Activated T-helper 1 cell treated with anti-CD3 and anti-CD28 coated beads, Interleukin-12 subunit alpha, Interleukin-12 subunit beta, Interleukin-2, Interleukin-4 antibody, amounts not matched to agents 30 ng/mL and 10 ng/mL and 1 ng/mL, durations not matched to agents 14 hours and 24 hours and 36 hours (primary cell): ENCODE measurements at regions of chr20 and their contacts with region 1.

Region 1: GRCh38 chr20:33992923-33993575 is 662 bp upstream of the RALY start:
- DNase-seq: peak; percentile 99
- H3K4me3 Mint-ChIP-seq: peak overlapping the region; percentile 88
- H3K27ac Mint-ChIP-seq: peak overlapping the region; percentile 97
- H3K4me1 Mint-ChIP-seq: peaks cover 58% of the 10 kb centered on the region
- H3K27me3 Mint-ChIP-seq: peaks cover 2% of the 10 kb centered on the region

Region 2: DNA sequence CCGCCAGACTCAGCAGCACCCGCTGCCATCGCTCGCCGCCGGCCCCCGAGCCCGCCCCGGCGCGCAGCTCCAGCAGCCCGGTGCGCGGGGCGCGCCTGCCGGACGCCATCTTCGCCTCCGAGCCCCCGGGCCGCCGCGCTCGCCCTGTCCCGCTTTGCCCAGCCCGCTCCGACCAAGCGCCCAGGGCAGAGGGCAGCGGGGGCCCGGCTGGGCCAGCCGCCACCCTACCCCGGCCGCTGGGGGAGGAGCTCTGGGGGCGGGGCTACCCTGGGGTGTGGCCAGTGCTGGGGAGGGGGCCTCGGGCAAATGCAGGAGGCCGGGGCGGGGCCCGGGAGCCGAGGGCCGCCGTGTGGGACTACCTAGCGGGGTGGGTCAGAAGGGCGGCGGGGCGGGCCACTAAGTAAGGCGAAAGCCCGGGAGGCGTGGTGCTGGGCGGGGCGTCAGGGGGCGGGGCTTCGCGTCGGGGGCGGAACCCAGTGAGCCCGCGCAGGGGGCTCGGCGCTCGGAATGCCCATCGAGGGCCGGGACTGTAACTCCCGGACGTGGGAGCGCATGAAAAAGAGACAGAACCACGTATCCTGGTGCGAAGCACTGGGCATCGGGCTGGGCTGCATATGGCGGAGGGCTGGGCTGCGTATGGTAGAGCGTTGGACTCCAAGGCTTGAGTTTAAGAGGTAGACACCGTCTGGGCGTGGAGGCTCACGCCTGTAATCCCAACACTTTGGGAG is 549.4 kb before region 1 on chr20 and contains the start of gene SNTA1:
- intact Hi-C with region 1: loop called (anchors 1 kb)
- DNase-seq: peak; percentile 82
- H3K4me3 Mint-ChIP-seq: peak within 1 kb of the TSS; percentile 88
- H3K27ac Mint-ChIP-seq: peak within 1 kb of the TSS; percentile 76
- H3K4me1 Mint-ChIP-seq: peaks cover 10% of the 10 kb centered on the region
- H3K27me3 Mint-ChIP-seq: peaks cover 11% of the 10 kb centered on the region
- total RNA-seq, gene SNTA1: 0.76 and 0.91 TPM in 2 replicates

Region 3: GRCh38 chr20:33719989-33720709 is 272.9 kb before region 1 on chr20 and contains the start of gene PXMP4:
- intact Hi-C with region 1: loop called (anchors 5 kb)
- DNase-seq: peak; percentile 88
- H3K4me3 Mint-ChIP-seq: peak within 1 kb of the TSS; percentile 85
- H3K27ac Mint-ChIP-seq: peak within 1 kb of the TSS; percentile 93
- H3K4me1 Mint-ChIP-seq: peaks cover 30% of the 10 kb centered on the region
- H3K27me3 Mint-ChIP-seq: no peaks in the 10 kb centered on the region
- total RNA-seq, gene PXMP4: 7.3 and 7.9 TPM in 2 replicates

Region 4: DNA sequence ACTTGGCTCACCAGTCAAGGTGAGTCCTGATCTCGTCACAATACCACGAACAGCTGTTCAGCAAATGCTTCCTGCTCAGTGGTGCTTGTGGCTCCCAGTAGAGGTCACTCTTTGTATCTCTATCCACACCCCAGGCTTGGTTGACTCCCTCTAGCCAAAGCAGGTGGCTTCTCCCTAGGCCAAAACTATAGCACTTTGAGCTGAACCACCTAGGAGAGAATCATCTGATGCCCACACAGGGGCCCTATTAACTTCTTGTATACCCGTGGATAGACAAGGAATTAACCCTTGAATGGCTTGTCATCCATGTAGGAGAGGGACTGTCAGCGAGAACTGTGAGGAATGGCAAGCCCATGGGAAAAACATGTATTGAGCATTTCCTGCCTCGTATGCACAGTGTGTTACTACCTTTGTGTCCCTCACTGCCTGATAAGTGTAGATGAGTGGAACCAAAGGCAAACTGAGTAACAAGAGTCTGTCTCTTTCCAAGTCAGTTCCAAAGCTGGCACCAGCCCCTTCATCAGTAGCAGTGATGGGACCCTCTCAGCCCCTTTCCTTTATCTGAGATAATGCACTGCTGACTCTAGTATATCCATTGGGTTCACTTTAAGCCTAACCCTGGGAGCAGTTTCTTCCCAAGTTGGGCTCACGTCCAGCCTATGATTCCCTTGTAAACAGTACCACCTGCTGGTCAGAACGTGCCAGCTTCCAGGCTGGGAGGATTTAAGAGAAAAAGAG is 76.5 kb after region 1 on chr20:
- intact Hi-C with region 1: loop called (anchors 1 kb)
- DNase-seq: peak; percentile 25
- H3K4me3 Mint-ChIP-seq: no peak overlapping the region
- H3K27ac Mint-ChIP-seq: no peak overlapping the region
- H3K4me1 Mint-ChIP-seq: peaks cover 35% of the 10 kb centered on the region
- H3K27me3 Mint-ChIP-seq: no peaks in the 10 kb centered on the region

Region 5: GRCh38 chr20:34363062-34363464 is 370.0 kb after region 1 on chr20 and contains the start of gene ITCH:
- intact Hi-C with region 1: loop called (anchors 10 kb)
- DNase-seq: peak; percentile 91
- H3K4me3 Mint-ChIP-seq: peak within 1 kb of the TSS; percentile 100
- H3K27ac Mint-ChIP-seq: peak within 1 kb of the TSS; percentile 100
- H3K4me1 Mint-ChIP-seq: peaks cover 26% of the 10 kb centered on the region
- H3K27me3 Mint-ChIP-seq: no peaks in the 10 kb centered on the region
- total RNA-seq, gene ITCH: 55.6 and 66.4 TPM in 2 replicates

Region 6: DNA sequence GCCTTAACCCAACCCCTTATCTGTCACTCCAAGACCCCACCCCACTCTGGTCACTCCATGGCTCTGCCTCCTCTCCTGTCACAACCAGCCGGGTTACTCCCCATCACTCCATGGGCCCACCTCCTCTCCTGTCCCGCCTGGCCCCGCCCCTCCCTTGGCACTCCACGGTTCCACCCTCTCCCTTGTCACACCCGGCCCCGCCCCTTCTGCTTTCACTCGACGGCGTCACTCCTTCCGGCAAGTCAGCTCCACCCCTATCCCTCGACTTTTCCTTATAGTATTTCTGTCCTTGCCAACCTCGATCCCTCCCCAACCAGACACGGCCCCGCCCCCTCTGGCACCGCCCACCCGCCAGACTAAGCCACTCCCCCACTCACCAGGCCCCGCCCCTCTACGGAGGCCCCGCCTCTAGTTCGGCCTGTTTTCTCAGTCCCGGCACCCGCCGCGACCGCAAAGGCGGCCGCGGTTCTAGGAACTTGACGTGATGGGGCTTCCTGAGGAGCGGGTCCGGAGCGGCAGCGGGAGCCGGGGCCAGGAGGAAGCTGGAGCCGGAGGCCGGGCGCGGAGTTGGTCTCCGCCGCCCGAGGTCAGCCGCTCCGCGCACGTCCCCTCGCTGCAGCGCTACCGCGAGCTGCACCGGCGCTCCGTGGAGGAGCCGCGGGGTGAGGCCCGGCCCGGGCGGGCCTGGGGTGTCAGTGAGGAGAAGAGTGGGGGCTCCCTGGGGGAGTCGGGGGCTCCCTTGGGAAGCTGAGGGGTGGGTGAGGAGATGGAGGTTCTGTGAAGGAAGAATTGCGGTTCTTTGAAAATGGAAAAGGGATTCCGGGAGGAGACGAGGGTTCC is 883.3 kb after region 1 on chr20 and contains the start of gene ACSS2:
- intact Hi-C with region 1: loop called (anchors 2 kb)
- DNase-seq: peak; percentile 95
- H3K4me3 Mint-ChIP-seq: peak within 1 kb of the TSS; percentile 96
- H3K27ac Mint-ChIP-seq: peak within 1 kb of the TSS; percentile 82
- H3K4me1 Mint-ChIP-seq: peaks cover 73% of the 10 kb centered on the region
- H3K27me3 Mint-ChIP-seq: peaks cover 4% of the 10 kb centered on the region
- total RNA-seq, gene ACSS2: 38.0 and 45.3 TPM in 2 replicates